Ascending aorta (tissue), 2 donors: ENCODE measurements at regions of chr2 and their contacts with region 1.

Region 1: DNA sequence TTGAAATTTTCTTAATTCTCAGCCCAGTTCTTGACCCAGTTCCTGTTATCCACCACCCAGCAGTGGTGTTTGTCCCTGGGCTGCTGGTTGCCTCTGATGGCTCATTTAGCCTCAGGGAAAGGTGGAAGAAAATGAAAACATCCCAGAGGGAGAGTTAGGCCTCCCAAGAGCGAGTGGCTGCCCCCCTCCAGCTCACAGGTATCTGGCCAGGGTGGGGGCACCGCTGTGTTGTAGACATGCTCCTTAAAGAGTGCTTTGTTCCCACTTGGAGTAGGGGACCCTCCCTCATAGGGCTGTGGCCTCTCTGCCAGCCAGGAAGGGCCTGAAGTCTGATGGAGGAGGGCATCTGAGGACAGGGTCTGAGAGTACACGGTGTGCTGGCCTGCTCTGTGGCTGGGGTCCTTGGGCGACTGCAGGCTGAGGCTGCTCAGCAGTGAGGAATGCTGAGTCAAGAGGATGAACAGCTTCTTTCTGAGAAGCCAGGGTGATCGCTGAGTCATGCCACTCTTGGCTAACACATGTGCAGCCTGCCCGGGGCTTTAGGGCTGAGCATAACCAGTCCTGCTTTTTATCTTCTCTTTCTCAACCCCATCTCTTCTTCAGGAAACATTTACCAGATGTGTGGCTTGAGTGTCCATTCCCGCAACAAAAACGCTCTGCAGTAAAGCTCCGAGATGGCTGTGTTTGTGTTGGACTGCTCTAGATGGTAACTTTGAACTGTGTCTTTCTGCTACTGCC is 72.3 kb downstream of the IL1R2 start:
- DNase-seq: peak; percentile 89 to 98
- H3K4me3 ChIP-seq: peak overlapping the region; percentile 31 to 38
- H3K27ac ChIP-seq: peak overlapping the region; percentile 94 to 98
- H3K4me1 ChIP-seq: peaks cover 31 to 49% of the 10 kb centered on the region in 2 donors
- H3K27me3 ChIP-seq: no peaks in the 10 kb centered on the region
- CTCF ChIP-seq: no peak

Region 2: DNA sequence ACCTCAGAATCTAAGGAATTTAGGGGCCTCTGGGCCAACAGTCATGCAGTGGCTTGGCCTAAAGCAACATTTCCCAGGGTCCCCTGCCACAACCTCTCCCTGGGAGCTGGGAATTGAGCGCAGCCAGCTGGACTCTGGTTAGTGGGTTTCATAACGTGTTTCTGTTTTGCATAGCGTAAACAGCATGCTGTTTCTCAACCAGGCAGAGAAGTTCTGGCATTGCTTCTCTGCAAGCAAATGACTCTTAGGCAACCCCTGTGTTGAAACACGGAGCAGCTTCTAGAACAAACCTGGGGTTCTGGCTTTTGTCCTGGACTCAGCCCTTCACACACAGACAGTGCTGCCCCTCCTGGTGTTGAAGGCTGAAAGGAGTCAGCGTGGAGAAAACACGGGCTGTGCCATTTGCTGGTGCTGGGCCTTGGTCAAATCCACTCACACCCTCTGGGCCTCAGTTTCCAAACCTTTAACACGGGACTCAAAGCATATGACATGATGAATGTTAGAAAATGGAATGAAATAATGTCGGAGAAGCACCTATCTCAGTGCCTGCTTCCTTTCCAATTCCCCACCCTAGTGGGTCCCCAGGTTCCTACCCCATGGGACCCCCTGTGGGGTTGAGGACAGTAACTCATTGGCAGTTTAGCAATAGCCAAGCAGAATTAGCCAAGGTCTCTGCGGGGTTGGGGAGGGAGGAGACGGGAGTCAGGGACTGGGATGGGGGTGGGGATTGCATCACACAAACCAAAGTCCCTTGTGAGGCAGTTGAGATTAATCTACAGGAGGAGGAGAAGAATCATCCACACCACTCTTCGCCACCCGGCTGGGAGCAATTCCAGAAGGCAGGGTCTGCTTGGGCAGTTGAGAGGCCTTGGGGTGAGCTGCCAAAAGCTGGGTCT is 102.6 kb before region 1 on chr2:
- intact Hi-C with region 1: loop called (anchors 1 kb)
- DNase-seq: peak; percentile 61 to 94
- H3K4me3 ChIP-seq: peak overlapping the region in 1 of 2 donors; percentile 21
- H3K27ac ChIP-seq: peak overlapping the region; percentile 66 to 80
- H3K4me1 ChIP-seq: peaks cover 6 to 18% of the 10 kb centered on the region in 2 donors
- H3K27me3 ChIP-seq: no peaks in the 10 kb centered on the region
- CTCF ChIP-seq: peak; percentile 13 to 30 (median 14)

Region 3: GRCh38 chr2:102037681-102038080 is 26.4 kb before region 1 on chr2:
- intact Hi-C with region 1: loop called (anchors 1 kb)
- DNase-seq: peak in 1 of 2 donors; percentile 77
- H3K4me3 ChIP-seq: peak overlapping the region in 1 of 2 donors; percentile 34
- H3K27ac ChIP-seq: peak overlapping the region; percentile 78 to 89
- H3K4me1 ChIP-seq: peaks cover 0 to 27% of the 10 kb centered on the region in 2 donors
- H3K27me3 ChIP-seq: no peaks in the 10 kb centered on the region
- CTCF ChIP-seq: no peak

Region 4: DNA sequence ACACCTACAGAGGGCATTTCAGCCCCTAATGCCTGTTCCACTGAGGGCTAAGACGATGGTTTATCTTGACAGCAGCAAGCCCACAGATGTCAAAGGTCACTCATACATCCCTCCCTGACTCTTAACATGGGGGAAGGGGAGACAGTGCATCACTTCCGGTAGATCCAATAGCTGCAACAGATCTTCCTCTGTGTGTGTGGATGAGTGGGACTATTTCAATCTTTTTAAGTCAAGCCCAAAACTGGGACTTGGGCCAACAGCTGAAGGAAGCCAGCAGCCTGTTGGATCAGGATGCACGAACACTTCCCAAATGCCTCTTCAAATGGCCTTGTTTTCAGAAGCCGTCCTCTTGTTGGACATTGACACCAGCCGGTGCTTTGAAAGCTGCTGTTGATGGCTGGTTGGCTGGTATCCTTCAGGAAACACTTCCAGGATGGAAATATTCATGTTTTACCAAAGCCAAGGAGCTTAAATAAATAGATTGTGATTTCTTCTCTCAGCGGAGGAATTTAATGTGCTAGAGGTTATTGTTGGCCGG is 13.2 kb before region 1 on chr2:
- intact Hi-C with region 1: loop called (anchors 1 kb)
- DNase-seq: peak; percentile 52 to 91
- H3K4me3 ChIP-seq: no peak overlapping the region
- H3K27ac ChIP-seq: peak overlapping the region; percentile 77 to 89
- H3K4me1 ChIP-seq: peaks cover 16 to 24% of the 10 kb centered on the region in 2 donors
- H3K27me3 ChIP-seq: no peaks in the 10 kb centered on the region
- CTCF ChIP-seq: no peak

Region 5: GRCh38 chr2:102122110-102122509 is 58.0 kb after region 1 on chr2:
- intact Hi-C with region 1: loop called (anchors 5 kb)
- DNase-seq: peak in 1 of 2 donors; percentile 74
- H3K4me3 ChIP-seq: no peak overlapping the region
- H3K27ac ChIP-seq: peak overlapping the region; percentile 74 to 75
- H3K4me1 ChIP-seq: peaks cover 0 to 18% of the 10 kb centered on the region in 2 donors
- H3K27me3 ChIP-seq: no peaks in the 10 kb centered on the region
- CTCF ChIP-seq: no peak

Region 6: DNA sequence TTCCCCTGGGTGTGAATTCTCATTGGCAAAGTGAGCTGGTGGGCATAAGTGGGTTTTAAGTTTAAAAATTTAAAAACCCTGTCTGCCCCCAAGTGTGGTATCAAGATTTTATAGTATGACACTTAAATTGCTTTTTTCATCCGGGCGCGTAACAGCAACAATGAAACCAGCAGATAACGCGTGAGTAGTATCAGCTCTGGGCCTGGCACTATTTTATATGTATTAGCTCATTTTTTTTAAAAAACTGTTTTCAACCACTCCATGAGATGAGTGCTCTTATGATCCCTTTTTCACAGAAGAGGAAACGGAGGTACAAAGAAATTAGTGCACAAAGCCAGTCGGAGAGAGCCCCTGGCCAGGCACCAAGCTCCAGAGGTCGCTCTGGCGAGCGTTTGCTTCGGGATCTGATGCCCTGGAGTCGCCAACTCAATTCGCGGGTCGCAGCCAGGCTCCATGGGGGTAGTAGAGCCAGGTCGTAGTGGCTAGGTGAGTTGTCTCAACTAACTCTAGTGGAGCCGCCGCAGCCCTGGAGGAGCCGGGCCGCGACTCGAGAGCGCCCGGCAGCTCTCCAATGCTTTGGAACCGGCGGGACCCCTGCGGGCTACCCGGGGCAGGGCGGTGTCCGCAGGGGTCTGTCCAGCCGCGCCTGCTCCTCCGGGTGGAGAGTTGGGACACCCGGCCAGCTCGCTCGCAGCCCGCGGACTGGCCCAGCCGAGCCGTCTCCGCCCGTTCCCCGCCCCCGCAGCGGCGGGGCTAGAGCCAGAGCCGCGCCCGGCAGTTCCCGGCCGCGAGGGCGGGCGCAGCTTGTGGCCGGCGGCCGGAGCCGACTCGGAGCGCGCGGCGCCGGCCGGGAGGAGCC is 78.1 kb after region 1 on chr2 and contains the start of gene IL1R1:
- intact Hi-C with region 1: loop called (anchors 1 kb)
- DNase-seq: peak in 1 of 2 donors; percentile 88
- H3K4me3 ChIP-seq: peak within 1 kb of the TSS; percentile 64 to 77
- H3K27ac ChIP-seq: peak within 1 kb of the TSS; percentile 93 to 96
- H3K4me1 ChIP-seq: peaks cover 0 to 5% of the 10 kb centered on the region in 2 donors
- H3K27me3 ChIP-seq: no peaks in the 10 kb centered on the region
- CTCF ChIP-seq: no peak
- total RNA-seq, gene IL1R1: 132 TPM

Region 7: GRCh38 chr2:102473020-102473419 is 408.9 kb after region 1 on chr2 and contains the start of gene SLC9A4:
- intact Hi-C with region 1: no loop called
- DNase-seq: no peak
- H3K4me3 ChIP-seq: no peak within 1 kb of the TSS
- H3K27ac ChIP-seq: no peak within 1 kb of the TSS
- H3K4me1 ChIP-seq: no peaks in the 10 kb centered on the region
- H3K27me3 ChIP-seq: no peaks in the 10 kb centered on the region
- CTCF ChIP-seq: peak; percentile 40 to 76 (median 59)
- total RNA-seq, gene SLC9A4: not detected